CD4-positive, alpha-beta T cell (primary cell): ENCODE measurements at regions of chr3 and their contacts with region 1.

Region 1: DNA sequence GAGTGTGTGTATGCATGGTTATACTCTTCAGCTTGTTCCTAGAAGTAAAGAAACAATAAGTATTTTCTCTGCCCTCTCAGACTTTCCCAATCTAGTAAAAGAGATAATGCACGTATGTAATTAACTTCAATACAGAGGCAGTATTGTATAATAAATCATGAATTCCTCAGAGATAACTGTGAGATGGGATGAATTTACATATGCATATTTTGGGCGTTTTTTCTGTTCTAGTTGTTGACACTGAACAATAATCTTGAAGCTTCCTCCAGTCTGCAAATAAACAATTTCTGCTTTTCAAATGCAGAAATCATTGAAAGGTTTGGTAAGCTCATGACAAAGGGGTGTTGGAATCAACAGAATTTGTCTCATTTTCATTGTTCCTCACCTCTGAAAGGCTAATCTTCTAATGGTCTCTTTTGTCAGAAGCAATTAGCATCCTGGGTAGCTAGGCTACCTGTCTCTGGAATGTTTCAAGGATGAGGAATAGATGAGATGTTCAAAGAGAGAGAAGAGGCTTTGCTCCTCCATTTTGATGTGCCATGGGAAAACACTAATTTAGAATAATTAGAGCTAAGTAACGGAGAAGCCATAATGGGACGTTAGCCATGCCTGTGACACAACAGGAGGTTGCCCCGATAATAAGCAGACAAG is 43.3 kb upstream of the SIAH2 start:
- DNase-seq: no peak
- ATAC-seq: no peak
- H3K4me3 ChIP-seq: no peak overlapping the region
- H3K4me3 Mint-ChIP-seq: no peak overlapping the region
- H3K27ac ChIP-seq: no peak overlapping the region
- H3K27ac Mint-ChIP-seq: no peak overlapping the region
- H3K4me1 ChIP-seq: no peaks in the 10 kb centered on the region
- H3K4me1 Mint-ChIP-seq: no peaks in the 10 kb centered on the region
- H3K27me3 ChIP-seq: no peaks in the 10 kb centered on the region
- H3K27me3 Mint-ChIP-seq: peaks cover 3% of the 10 kb centered on the region
- CTCF ChIP-seq: no peak

Region 2: DNA sequence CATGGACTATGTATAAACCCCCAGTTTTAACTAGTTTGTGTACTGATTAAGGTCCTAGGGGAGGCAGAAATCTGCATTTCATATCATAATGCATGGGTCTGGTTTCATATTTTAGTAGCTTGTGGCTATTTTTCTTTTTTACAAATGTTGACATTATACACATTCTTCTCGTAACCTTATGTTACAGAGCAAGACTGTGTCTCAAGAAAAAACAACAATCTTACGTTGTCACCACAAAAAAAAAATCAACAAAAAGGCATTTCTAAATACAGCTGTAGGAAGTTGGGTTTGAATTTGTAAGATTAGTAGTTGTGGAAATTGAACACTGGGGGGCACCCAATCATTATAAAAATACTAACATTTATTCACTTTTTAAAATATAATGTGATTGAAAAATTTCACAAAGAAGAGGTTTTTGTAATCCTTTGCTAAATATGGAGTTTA is 277.9 kb before region 1 on chr3:
- CTCF ChIA-PET with region 1: no interaction called
- POLR2A ChIA-PET with region 1: no interaction called
- intact Hi-C with region 1: no loop called
- DNase-seq: peak in 4 of 14 experiments; percentile 14 to 55 (median 41)
- ATAC-seq: peak; percentile 48
- H3K4me3 ChIP-seq: no peak overlapping the region
- H3K4me3 Mint-ChIP-seq: no peak overlapping the region
- H3K27ac ChIP-seq: no peak overlapping the region
- H3K27ac Mint-ChIP-seq: no peak overlapping the region
- H3K4me1 ChIP-seq: no peaks in the 10 kb centered on the region
- H3K4me1 Mint-ChIP-seq: peaks cover 4% of the 10 kb centered on the region
- H3K27me3 ChIP-seq: no peaks in the 10 kb centered on the region
- H3K27me3 Mint-ChIP-seq: no peaks in the 10 kb centered on the region
- CTCF ChIP-seq: peak; percentile 58

Region 3: DNA sequence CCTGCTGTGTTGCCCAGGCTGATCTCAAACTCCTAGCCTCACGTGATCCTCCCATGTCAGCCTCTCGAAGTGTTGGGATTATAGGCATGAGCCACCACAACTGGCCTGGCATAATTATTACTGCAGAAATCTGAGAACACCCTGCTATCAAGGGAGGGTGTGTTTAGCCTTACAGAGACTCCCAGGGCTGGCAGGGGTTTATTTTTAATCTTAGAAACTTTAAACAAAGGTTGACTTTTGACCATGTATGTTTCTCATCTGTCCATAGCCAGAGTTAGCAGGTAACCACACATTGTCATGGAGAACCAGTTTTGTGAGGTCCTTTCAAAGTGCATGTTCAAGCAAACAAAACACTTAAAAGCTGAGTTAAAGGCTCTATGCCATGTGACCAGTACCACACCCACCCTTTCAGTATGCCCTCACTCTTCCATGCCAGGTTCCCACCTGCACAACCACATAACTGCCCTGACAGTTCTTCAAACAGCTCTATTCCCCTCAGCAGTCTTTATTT is 54.5 kb before region 1 on chr3:
- CTCF ChIA-PET with region 1: no interaction called
- POLR2A ChIA-PET with region 1: no interaction called
- intact Hi-C with region 1: no loop called
- DNase-seq: no peak
- ATAC-seq: no peak
- H3K4me3 ChIP-seq: no peak overlapping the region
- H3K4me3 Mint-ChIP-seq: no peak overlapping the region
- H3K27ac ChIP-seq: no peak overlapping the region
- H3K27ac Mint-ChIP-seq: peak overlapping the region; percentile 42
- H3K4me1 ChIP-seq: peaks cover 44% of the 10 kb centered on the region
- H3K4me1 Mint-ChIP-seq: peaks cover 88% of the 10 kb centered on the region
- H3K27me3 ChIP-seq: no peaks in the 10 kb centered on the region
- H3K27me3 Mint-ChIP-seq: no peaks in the 10 kb centered on the region
- CTCF ChIP-seq: no peak

Region 4: DNA sequence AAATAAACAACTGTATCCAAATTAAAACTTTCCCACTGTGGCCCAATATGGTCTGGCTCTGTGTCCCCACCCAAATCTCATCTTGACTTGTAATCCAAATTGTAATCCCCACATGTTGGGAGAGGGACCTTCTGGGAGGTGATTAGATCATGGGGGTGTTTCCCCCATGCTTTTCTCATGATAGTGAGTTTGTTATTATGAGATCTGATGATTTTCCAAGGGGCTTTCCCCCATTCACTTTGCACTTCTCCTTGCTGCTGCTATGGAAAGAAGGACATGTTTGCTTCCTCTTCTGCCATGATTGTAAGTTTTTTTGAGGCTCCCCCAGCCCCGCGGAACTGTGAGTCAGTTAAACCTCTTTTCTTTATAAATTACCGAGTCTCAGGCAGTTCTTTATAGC is 43.9 kb after region 1 on chr3:
- CTCF ChIA-PET with region 1: no interaction called
- POLR2A ChIA-PET with region 1: no interaction called
- intact Hi-C with region 1: loop called in 1 of 2 experiments (anchors 5 kb)
- DNase-seq: no peak
- ATAC-seq: no peak
- H3K4me3 ChIP-seq: no peak overlapping the region
- H3K4me3 Mint-ChIP-seq: no peak overlapping the region
- H3K27ac ChIP-seq: no peak overlapping the region
- H3K27ac Mint-ChIP-seq: no peak overlapping the region
- H3K4me1 ChIP-seq: no peaks in the 10 kb centered on the region
- H3K4me1 Mint-ChIP-seq: no peaks in the 10 kb centered on the region
- H3K27me3 ChIP-seq: peaks cover 0 to 8% of the 10 kb centered on the region in 2 experiments
- H3K27me3 Mint-ChIP-seq: peaks cover 4% of the 10 kb centered on the region
- CTCF ChIP-seq: no peak